Activated T-helper 2 cell treated with anti-CD3 and anti-CD28 coated beads, Interferon-gamma antibody, Interleukin-2, Interleukin-4, amounts not matched to agents 10 μg/mL and 5 μg/mL and 100 μg/mL, durations not matched to agents 14 hours and 24 hours and 36 hours (primary cell): ENCODE measurements at regions of chr9 and their contacts with region 1.

Region 1: GRCh38 chr9:8436786-8437185 is 637.2 kb upstream of the DMAC1 start:
- DNase-seq: no peak
- H3K4me3 Mint-ChIP-seq: no peak overlapping the region
- H3K27ac Mint-ChIP-seq: peak overlapping the region; percentile 88
- H3K4me1 Mint-ChIP-seq: peaks cover 17% of the 10 kb centered on the region
- H3K27me3 Mint-ChIP-seq: no peaks in the 10 kb centered on the region

Region 2: DNA sequence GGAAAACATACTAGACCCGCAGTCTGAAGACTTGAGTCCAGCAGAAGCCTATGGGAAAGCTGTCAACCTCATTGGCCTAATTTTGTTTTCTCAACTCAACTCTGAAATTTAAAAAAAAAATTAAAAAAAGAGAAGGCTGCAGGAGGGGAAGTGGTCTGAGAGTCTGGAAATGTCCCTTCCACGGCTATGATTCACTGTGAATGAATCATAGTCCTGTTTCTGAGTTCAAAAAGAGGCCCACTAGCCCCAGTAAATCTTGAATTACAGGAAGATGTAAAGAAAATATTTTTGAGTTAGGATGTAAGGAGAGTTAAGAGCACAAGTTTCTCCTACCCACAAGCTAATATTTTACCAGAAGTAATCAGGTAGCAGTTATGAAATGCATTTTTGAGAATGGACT is 71.8 kb before region 1 on chr9:
- intact Hi-C with region 1: loop called (anchors 1 kb)
- DNase-seq: no peak
- H3K4me3 Mint-ChIP-seq: no peak overlapping the region
- H3K27ac Mint-ChIP-seq: peak overlapping the region; percentile 4
- H3K4me1 Mint-ChIP-seq: peaks cover 12% of the 10 kb centered on the region
- H3K27me3 Mint-ChIP-seq: no peaks in the 10 kb centered on the region

Region 3: GRCh38 chr9:8382266-8382665 is 54.5 kb before region 1 on chr9:
- intact Hi-C with region 1: no loop called
- DNase-seq: no peak
- H3K4me3 Mint-ChIP-seq: no peak overlapping the region
- H3K27ac Mint-ChIP-seq: no peak overlapping the region
- H3K4me1 Mint-ChIP-seq: no peaks in the 10 kb centered on the region
- H3K27me3 Mint-ChIP-seq: no peaks in the 10 kb centered on the region

Region 4: GRCh38 chr9:8477450-8477849 is 40.7 kb after region 1 on chr9:
- intact Hi-C with region 1: no loop called
- DNase-seq: no peak
- H3K4me3 Mint-ChIP-seq: no peak overlapping the region
- H3K27ac Mint-ChIP-seq: no peak overlapping the region
- H3K4me1 Mint-ChIP-seq: no peaks in the 10 kb centered on the region
- H3K27me3 Mint-ChIP-seq: no peaks in the 10 kb centered on the region